HCT116 (cell line): ENCODE measurements at regions of chrX and their contacts with region 1.

Region 1: GRCh38 chrX:129925305-129926092 is 19.5 kb downstream of the UTP14A start:
- DNase-seq: peak; percentile 44
- ATAC-seq: peak; percentile 80
- H3K4me3 ChIP-seq: no peak overlapping the region
- H3K27ac ChIP-seq: no peak overlapping the region
- H3K4me1 ChIP-seq: no peaks in the 10 kb centered on the region
- H3K27me3 ChIP-seq: no peaks in the 10 kb centered on the region
- CTCF ChIP-seq: peak in 2 of 3 experiments; percentile 60 to 69; a peak in 4 of 6 replicates
- POLR2A ChIP-seq: no peak
- RAD21 ChIP-seq: no peak

Region 2: DNA sequence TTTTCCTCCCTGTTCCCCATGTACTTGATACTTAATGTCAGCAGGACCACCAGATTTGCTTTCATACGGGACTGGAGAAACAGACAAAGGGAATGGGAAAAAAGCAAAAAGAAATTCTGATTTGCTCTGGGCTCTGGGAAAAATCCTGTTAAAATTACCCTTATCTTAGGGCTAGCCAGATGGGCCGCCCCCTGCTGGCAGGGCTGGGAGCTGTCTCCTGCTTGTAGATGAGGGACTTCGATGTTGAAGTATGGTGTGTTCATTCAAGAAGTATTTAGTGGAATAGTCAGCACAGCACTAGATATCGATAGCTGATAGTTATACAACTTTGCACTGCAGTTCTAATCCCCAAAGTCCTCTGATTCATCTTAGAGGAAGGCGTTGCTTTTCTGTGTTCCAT is 102.7 kb after region 1 on chrX:
- CTCF ChIA-PET with region 1: interaction called, 16 read pairs
- POLR2A ChIA-PET with region 1: no interaction called
- RAD21 ChIA-PET with region 1: no interaction called
- intact Hi-C with region 1: loop called (anchors 1 kb)
- DNase-seq: peak; percentile 3
- ATAC-seq: peak; percentile 57; the same call in 1 of the 2 replicates
- H3K4me3 ChIP-seq: no peak overlapping the region
- H3K27ac ChIP-seq: no peak overlapping the region
- H3K4me1 ChIP-seq: no peaks in the 10 kb centered on the region
- H3K27me3 ChIP-seq: no peaks in the 10 kb centered on the region
- CTCF ChIP-seq: peak; percentile 38 to 72 (median 39); a peak in 4 of 6 replicates
- POLR2A ChIP-seq: no peak
- RAD21 ChIP-seq: peak; percentile 47

Region 3: GRCh38 chrX:130060122-130061069 is 134.9 kb after region 1 on chrX:
- CTCF ChIA-PET with region 1: interaction called, 14 read pairs
- POLR2A ChIA-PET with region 1: no interaction called
- RAD21 ChIA-PET with region 1: interaction called in 1 of 2 experiments, 5 read pairs
- intact Hi-C with region 1: loop called (anchors 5 kb)
- DNase-seq: peak; percentile 12
- ATAC-seq: peak; percentile 91
- H3K4me3 ChIP-seq: peak overlapping the region in 1 of 2 experiments; percentile 23; a peak in 2 of 4 replicates
- H3K27ac ChIP-seq: no peak overlapping the region; the same call in 1 of the 2 replicates
- H3K4me1 ChIP-seq: peaks cover 2 to 9% of the 10 kb centered on the region in 2 experiments; a peak in 3 of 4 replicates
- H3K27me3 ChIP-seq: no peaks in the 10 kb centered on the region
- CTCF ChIP-seq: peak; percentile 63 to 73 (median 64); a peak in 5 of 6 replicates
- POLR2A ChIP-seq: no peak
- RAD21 ChIP-seq: peak; percentile 85

Region 4: GRCh38 chrX:130746709-130747342 is 821.3 kb after region 1 on chrX:
- CTCF ChIA-PET with region 1: no interaction called
- POLR2A ChIA-PET with region 1: no interaction called
- RAD21 ChIA-PET with region 1: no interaction called
- intact Hi-C with region 1: no loop called
- DNase-seq: no peak
- ATAC-seq: no peak
- H3K4me3 ChIP-seq: no peak overlapping the region
- H3K27ac ChIP-seq: no peak overlapping the region
- H3K4me1 ChIP-seq: no peaks in the 10 kb centered on the region
- H3K27me3 ChIP-seq: no peaks in the 10 kb centered on the region
- CTCF ChIP-seq: no peak
- POLR2A ChIP-seq: no peak
- RAD21 ChIP-seq: no peak